ENCODE measurements at regions of chr3 and their contacts with region 1.

Region 1: GRCh38 chr3:190811775-190812480 is 50.6 kb downstream of the GMNC start:
- DNase-seq: peak; percentile 72
- H3K4me3 Mint-ChIP-seq: peak overlapping the region; percentile 69
- H3K27ac Mint-ChIP-seq: peak overlapping the region; percentile 59
- H3K4me1 Mint-ChIP-seq: peaks cover 23% of the 10 kb centered on the region
- H3K27me3 Mint-ChIP-seq: no peaks in the 10 kb centered on the region
- CTCF ChIP-seq: peak; percentile 90

Region 2: DNA sequence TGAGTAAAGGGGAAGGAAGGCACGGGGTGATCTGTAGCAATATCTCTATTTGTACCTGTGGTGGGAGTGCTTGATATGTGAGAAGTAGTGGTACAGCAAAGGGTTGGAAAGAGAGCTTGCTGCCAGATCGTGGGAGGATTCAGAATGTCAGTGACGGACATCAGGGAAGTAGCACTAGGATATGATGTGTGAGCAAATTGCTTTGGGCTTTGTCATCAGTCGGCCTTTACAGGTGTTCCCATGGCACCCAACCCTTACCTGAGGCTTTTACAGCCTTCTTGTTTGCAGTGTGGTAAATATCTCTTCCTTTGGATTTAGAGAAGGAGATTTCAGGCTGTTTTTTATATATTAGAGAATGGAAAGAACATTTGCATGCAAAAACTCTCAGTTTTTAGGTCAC is 268.3 kb before region 1 on chr3:
- CTCF ChIA-PET with region 1: no interaction called
- intact Hi-C with region 1: no loop called
- DNase-seq: peak; percentile 51
- H3K4me3 Mint-ChIP-seq: no peak overlapping the region
- H3K27ac Mint-ChIP-seq: peak overlapping the region; percentile 66
- H3K4me1 Mint-ChIP-seq: peaks cover 60% of the 10 kb centered on the region
- H3K27me3 Mint-ChIP-seq: no peaks in the 10 kb centered on the region
- CTCF ChIP-seq: no peak

Region 3: DNA sequence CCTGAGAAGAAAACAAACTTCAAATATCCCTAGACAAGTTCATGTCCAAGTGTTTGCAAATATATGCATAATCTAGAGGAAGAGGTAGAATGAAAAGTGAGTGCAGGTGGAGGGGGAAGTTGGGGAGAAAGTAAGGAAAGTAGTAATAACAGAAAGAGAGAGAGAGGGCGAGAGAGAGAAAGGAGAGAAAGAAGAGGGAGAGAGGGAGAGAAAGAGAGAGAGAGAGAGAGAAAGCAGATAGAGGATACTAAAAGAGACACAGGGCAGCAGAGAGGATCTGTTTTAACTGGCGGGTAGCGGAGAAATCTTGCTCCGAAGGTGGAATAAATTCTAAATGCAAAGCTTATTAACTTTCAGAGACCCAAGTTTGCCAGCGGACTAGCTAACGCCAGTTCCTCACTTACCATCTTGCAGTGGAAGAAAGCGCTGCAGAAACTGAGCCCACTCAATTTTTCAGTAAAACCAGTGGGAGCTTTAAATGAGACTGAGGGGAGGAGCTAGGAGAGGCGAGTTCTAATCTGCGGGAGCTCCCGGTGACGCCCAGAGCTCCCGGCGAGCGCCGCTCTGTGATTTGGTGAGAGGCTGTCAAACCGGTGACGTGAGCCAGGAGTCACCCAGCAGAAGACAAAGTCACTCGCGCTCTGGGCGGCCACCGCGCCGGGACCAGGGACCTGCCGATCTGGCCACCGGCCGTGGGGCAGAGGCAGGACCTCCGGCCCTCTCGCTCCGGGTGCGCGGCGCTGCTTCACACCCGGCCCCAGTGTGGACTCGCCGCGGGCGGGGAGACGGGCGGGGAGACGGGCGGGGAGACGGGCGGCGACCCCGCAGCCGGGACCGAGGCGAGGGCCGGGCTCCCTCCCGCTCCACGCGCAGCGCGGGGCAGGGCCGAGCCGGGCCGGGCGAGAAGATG is 50.5 kb after region 1 on chr3 and contains the start of gene GMNC:
- CTCF ChIA-PET with region 1: interaction called, 5 read pairs
- intact Hi-C with region 1: loop called (anchors 2 kb)
- DNase-seq: peak; percentile 93
- H3K4me3 Mint-ChIP-seq: peak within 1 kb of the TSS; percentile 53
- H3K27ac Mint-ChIP-seq: peak within 1 kb of the TSS; percentile 5
- H3K4me1 Mint-ChIP-seq: peaks cover 33% of the 10 kb centered on the region
- H3K27me3 Mint-ChIP-seq: no peaks in the 10 kb centered on the region
- CTCF ChIP-seq: no peak
- total RNA-seq, gene GMNC: 0.24 and 0.29 TPM in 2 replicates

Region 4: DNA sequence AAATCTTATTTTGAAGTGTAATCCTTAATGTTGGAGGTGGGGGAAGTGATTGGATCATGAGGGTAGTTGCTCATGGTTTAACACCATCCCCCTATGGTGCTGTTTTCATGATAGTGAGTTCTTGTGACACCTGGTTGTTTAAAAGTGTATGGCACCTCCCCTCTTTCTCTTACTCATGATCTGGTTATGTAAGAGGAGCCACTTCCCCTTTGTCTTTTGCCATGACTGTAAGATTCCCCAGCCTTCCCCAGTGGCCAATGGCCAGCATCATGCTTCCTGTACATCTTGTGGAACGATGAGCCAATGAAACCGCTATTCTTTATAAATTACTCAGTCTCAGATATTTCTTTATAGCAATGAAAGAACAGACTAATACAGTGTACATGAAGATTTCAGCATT is 90.4 kb after region 1 on chr3:
- CTCF ChIA-PET with region 1: no interaction called
- intact Hi-C with region 1: no loop called
- DNase-seq: no peak
- H3K4me3 Mint-ChIP-seq: no peak overlapping the region
- H3K27ac Mint-ChIP-seq: no peak overlapping the region
- H3K4me1 Mint-ChIP-seq: no peaks in the 10 kb centered on the region
- H3K27me3 Mint-ChIP-seq: no peaks in the 10 kb centered on the region
- CTCF ChIP-seq: no peak

Measured in Calu3 (cell line).